AG04449 (cell line): ENCODE measurements at regions of chr16 and their contacts with region 1.

Region 1: DNA sequence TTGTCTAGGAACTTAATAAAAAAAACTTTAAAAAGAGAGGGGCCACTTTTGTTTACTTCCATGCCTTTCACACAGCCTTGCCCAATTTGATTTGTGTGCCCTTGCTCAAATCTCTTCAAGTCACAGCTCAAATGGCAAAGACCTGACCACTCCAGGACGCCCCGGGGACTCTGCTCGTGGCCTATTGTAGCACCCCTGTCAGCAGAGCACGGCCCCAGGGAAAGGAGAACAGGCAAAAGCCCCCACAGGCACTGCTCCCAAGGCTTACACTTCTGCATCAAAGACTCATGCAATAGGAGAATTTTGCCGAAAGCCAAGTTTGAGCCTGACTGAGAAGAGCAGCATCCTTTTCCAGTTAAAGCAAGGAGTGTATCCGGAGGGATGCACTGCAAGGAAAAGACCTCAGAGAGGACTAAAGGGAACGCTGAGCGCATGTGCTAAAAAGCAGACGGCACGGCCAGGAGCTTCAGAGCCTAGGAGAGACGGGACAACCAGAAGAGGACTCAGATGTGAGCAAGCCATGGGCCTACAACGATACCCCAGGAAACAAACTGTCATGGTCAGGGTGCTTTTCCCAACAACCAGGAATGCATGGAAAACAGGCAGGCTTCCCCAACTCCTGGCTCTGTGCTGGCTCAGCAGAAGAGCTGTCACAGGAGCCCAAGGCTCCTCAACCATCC is 8.2 kb downstream of the CREBBP start:
- DNase-seq: no peak
- H3K4me3 ChIP-seq: no peak overlapping the region
- CTCF ChIP-seq: no peak

Region 2: GRCh38 chr16:3861808-3862451 is 10.4 kb before region 1 on chr16:
- CTCF ChIA-PET with region 1: interaction called, 10 read pairs
- POLR2A ChIA-PET with region 1: interaction called, 3 read pairs
- DNase-seq: no peak
- H3K4me3 ChIP-seq: no peak overlapping the region
- CTCF ChIP-seq: no peak